K562 (cell line): ENCODE measurements at regions of chr5 and their contacts with region 1.

Region 1: DNA sequence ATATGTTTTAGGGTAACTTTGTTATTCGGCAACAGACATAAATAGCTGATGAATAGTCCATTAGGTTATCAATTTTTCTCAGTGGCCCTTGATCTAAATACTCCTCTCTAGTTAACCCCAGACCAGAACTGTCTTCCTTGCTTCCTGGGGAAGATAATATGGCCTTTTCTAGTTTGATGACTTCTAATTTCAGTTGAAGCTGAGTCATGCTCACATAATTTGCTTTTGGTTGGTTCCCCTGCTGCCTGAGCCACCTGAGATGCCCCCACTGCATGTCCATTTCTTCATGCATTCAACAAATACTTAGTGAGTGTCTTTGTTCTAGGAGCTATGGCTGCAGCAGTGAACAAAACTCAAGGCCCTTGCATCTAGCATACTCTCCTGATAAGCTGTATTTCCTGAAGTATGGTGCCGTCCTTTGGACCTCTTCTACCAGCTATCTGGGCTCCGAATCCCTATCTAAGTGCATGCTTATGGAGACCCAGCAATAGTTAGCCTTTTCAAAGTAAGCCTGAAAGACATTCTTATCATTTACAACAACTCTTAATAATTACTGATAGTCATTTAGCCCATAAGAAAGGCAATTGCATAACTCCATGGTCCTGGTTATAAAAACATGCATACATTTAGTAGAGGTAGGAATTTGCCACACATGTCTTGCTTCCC is 84.5 kb upstream of the SLC12A2 start:
- DNase-seq: no peak
- ATAC-seq: no peak; the same call in 1 of the 3 replicates
- H3K4me3 ChIP-seq: no peak overlapping the region
- H3K27ac ChIP-seq: peak overlapping the region; percentile 31; the same call in 1 of the 3 replicates
- H3K4me1 ChIP-seq: peaks cover 0 to 5% of the 10 kb centered on the region in 2 experiments; a peak in 2 of 5 replicates
- H3K27me3 ChIP-seq: no peaks in the 10 kb centered on the region
- CTCF ChIP-seq: no peak
- EP300 ChIP-seq: no peak
- POLR2A ChIP-seq: no peak
- RAD21 ChIP-seq: no peak

Region 2: DNA sequence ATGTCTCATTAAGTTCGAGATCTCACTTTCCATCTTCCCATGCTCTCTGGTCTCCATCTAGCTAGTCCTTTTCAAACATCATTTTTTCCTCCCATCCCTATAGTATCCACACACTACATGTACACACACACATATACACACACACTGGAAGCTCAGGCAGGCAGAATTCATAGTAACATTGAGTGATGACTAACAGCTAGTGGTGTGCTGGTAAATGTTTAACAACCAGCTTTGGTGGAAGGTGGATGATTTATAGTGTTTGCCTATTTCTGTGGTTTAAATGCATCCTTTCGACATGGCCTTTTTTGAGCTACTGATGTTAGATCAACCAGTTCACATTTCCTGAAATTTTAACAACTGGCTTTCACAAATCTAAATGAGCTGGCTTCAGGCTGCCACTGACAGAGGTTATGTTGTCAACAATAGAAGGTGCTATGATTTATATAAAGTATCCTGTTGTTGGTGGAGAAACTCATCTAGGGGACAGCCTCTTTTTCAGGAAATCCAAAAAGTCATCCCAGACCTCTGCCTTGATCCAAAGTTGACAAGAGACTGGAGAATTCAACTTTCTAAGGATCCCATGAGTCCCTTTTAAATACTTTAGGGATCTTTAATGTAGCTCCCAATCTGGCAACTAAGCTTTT is 178.1 kb before region 1 on chr5:
- CTCF ChIA-PET with region 1: no interaction called
- POLR2A ChIA-PET with region 1: no interaction called
- in situ Hi-C with region 1: no loop called
- intact Hi-C with region 1: no loop called
- DNase-seq: no peak
- ATAC-seq: no peak
- H3K4me3 ChIP-seq: no peak overlapping the region
- H3K27ac ChIP-seq: no peak overlapping the region
- H3K4me1 ChIP-seq: no peaks in the 10 kb centered on the region
- H3K27me3 ChIP-seq: no peaks in the 10 kb centered on the region
- CTCF ChIP-seq: no peak
- EP300 ChIP-seq: no peak
- POLR2A ChIP-seq: no peak
- RAD21 ChIP-seq: no peak

Region 3: GRCh38 chr5:128014578-128014977 is 15.5 kb after region 1 on chr5:
- CTCF ChIA-PET with region 1: no interaction called
- POLR2A ChIA-PET with region 1: interaction called, 10 read pairs
- in situ Hi-C with region 1: no loop called
- intact Hi-C with region 1: no loop called
- DNase-seq: no peak
- ATAC-seq: no peak
- H3K4me3 ChIP-seq: no peak overlapping the region
- H3K27ac ChIP-seq: no peak overlapping the region
- H3K4me1 ChIP-seq: peaks cover 0 to 13% of the 10 kb centered on the region in 2 experiments; a peak in 3 of 5 replicates
- H3K27me3 ChIP-seq: no peaks in the 10 kb centered on the region
- CTCF ChIP-seq: no peak
- EP300 ChIP-seq: no peak
- POLR2A ChIP-seq: no peak
- RAD21 ChIP-seq: no peak

Region 4: DNA sequence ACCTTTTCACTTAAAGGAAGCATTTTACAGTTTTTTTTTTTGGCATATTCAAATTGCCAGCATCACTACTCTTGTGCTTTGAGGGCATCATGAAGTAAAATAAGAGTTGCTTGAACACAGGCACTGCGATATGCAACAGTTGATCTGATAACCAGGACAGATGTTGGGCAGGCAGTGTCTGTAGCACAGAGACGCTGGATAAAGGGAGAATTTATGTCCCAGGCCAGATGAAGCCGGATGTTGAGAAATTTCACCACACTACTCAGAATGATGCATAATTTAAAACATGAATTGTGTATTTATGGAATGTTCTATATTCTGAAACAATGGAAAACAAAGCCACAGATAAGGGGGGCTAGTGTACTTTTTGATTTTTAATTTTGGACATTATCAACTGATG is 155.9 kb after region 1 on chr5:
- CTCF ChIA-PET with region 1: no interaction called
- POLR2A ChIA-PET with region 1: no interaction called
- in situ Hi-C with region 1: no loop called
- intact Hi-C with region 1: no loop called
- DNase-seq: no peak
- ATAC-seq: no peak
- H3K4me3 ChIP-seq: no peak overlapping the region
- H3K27ac ChIP-seq: no peak overlapping the region
- H3K4me1 ChIP-seq: no peaks in the 10 kb centered on the region
- H3K27me3 ChIP-seq: no peaks in the 10 kb centered on the region
- CTCF ChIP-seq: no peak
- EP300 ChIP-seq: no peak
- POLR2A ChIP-seq: no peak
- RAD21 ChIP-seq: no peak